PC-3 (cell line): ENCODE measurements at regions of chr1 and their contacts with region 1.

Region 1: GRCh38 chr1:240888039-240888786 is 276.3 kb upstream of the GREM2 start:
- DNase-seq: peak; percentile 83
- ATAC-seq: peak; percentile 64
- H3K4me3 ChIP-seq: no peak overlapping the region
- H3K27ac ChIP-seq: no peak overlapping the region
- H3K4me1 ChIP-seq: no peaks in the 10 kb centered on the region
- H3K27me3 ChIP-seq: peaks cover 25% of the 10 kb centered on the region
- CTCF ChIP-seq: peak; percentile 99

Region 2: DNA sequence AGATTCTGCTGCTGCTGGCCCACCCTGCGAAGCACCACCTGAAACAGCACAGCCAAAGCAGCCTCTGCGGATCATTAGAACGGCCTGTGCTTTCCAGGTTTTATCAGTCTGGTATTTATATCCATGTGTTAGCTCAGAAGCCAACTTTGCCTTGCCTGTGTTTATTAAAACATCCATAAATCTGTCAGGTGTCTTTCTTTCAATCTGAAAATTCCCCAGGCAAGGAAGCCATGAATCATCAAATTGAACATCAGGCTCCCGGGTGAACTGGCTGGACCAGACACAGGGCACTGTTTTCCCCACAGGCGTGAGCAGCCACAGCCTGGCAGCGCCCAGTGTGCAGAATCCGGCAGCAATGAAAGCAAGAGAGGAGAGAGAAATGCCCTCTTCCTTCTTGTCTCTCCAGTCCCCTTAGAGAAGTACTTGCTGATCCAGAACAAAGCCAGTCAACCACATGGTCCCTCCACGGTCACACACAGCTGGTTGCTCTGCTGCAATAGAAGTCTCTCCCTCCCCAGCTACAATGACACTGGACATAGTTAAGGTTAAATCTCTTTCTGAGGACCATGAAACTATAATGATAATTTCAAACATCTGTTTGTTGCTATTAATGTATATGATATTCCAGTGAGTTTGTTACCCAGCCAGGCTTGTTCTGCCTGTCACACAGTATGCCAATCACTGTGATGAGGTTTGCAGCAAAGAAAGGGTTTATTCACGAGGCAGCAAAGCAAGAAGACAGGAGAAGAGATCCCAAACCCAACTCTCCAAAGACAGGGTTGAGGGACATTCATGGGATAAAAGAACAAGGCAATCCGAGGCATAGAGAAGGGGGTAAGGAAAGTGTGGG is 1008.7 kb before region 1 on chr1:
- CTCF ChIA-PET with region 1: no interaction called
- POLR2A ChIA-PET with region 1: no interaction called
- intact Hi-C with region 1: no loop called
- DNase-seq: peak; percentile 90
- ATAC-seq: peak; percentile 89
- H3K4me3 ChIP-seq: no peak overlapping the region
- H3K27ac ChIP-seq: no peak overlapping the region
- H3K4me1 ChIP-seq: peaks cover 23% of the 10 kb centered on the region
- H3K27me3 ChIP-seq: no peaks in the 10 kb centered on the region
- CTCF ChIP-seq: no peak

Region 3: DNA sequence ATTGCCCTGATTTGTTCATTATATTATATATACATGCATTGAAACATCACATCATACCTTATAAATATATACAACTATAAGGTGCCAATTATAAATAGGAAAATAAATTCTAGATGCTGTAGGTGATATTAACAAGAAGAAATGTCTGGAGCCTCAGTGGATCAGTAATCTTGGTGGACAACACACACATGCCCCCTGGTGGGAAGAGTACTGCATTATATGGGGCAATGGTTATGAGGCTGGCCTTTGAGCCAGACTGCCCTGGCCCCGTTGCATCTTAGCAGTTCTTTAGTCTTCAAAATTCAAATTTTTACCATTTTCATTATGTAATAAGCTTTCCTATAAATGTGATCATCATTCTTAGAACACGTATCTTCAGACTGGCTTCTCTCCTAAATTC is 58.7 kb after region 1 on chr1:
- CTCF ChIA-PET with region 1: interaction called, 3 read pairs
- POLR2A ChIA-PET with region 1: no interaction called
- intact Hi-C with region 1: loop called (anchors 1 kb)
- DNase-seq: peak; percentile 89
- ATAC-seq: peak; percentile 99
- H3K4me3 ChIP-seq: no peak overlapping the region
- H3K27ac ChIP-seq: no peak overlapping the region
- H3K4me1 ChIP-seq: no peaks in the 10 kb centered on the region
- H3K27me3 ChIP-seq: peaks cover 49% of the 10 kb centered on the region
- CTCF ChIP-seq: peak; percentile 98